Posterior vena cava (tissue), 2 donors: ENCODE measurements at regions of chr4 and their contacts with region 1.

Region 1: DNA sequence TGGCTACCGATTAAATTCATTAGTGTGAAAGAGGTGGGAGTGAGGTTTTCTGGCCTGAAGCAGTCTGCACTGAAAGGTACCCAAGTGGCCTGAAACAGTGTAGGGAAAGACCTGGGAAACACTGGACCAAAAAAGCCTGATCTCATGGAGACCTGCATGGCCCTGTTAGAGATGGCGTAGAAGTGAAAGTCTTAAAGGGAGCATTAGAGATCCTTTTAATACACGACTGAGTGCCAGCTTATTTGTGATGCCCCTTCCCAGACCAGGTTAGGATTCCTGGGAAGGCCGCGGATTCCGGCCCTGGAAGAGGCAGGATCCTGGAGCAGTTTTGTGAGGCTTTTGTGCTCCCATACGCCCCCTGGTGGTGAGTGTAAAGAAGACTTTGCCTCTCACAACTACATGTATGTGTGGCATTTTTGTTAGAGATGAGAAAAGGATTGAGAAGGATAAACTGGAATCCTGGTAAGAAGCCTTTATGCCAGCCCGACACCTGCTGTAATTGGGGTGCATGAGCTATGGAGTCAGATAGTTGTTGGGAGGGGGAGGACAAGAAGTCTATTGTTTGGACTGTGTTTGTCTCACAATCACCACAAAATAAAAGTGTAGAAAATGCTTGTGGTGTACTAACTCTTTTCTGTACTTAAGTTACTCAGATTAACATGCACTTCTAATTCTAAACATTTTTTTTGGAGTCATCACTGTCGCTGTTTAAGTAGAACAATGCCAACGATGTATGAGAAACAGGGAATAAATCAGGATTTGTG is 54.0 kb downstream of the JADE1 start:
- DNase-seq: peak; percentile 88

Region 2: DNA sequence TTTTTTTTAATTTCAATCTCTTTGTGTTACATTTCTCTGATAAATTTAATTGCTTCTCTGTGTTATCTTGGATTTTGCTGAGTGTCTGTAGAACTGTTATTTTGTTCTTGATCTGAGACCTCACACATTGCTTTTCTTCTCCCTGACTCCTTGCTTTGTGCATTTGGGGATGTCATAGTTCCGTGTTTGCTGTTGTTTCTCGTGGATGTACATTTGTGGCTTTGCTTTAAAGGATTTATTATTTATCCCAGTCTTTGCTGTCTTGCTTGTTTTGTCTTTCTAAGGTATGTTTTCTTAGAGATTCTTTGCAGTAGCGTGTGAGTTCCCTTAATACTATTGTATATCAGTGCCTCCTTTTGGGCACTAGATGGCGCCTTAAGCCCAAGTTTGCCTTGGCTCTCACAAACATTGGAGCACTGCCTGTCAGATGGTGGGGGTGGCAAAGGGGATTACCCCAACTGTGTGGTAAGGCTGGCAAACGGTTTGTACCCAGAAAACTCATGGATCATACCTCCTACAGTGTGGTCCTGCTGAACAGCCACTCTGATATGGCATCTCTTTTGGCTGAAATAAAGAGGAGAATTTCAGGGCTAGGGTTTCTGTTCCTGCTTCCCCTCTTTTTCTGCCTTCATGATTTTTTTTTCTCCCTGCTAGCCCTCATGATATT is 672.2 kb before region 1 on chr4:
- intact Hi-C with region 1: loop called in 1 of 2 experiments (anchors 2 kb)
- DNase-seq: no peak

Region 3: GRCh38 chr4:128793859-128794672 is 69.4 kb before region 1 on chr4:
- intact Hi-C with region 1: no loop called
- DNase-seq: no peak